Mammary epithelial cell (primary cell): ENCODE measurements at regions of chr17 and their contacts with region 1.

Region 1: GRCh38 chr17:55584050-55584685 is 72.9 kb upstream of the SMIM36 start:
- DNase-seq: peak; percentile 53
- H3K4me3 ChIP-seq: no peak overlapping the region
- H3K27ac ChIP-seq: no peak overlapping the region
- H3K4me1 ChIP-seq: peaks cover 11% of the 10 kb centered on the region
- H3K27me3 ChIP-seq: no peaks in the 10 kb centered on the region
- CTCF ChIP-seq: no peak

Region 2: DNA sequence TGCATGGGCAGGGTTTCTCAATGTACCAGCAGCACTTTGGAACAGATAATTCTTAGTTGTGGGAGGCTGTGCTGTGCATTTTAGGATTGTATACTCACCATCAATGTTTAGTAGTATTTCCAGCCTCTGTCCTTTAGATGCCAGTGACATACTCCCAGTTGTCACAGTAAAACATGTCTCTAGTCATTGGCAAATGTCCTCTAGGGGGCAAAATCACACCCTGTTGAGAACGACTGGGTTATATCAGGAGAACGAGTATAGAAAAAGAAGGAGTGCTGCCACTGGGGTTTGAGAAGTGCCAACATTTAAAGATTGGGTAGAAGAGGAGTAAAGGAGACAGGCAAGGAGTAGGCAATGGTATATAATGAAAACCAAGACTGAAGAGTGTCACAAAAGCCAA is 35.0 kb before region 1 on chr17:
- CTCF ChIA-PET with region 1: no interaction called
- dilution Hi-C with region 1: no loop called
- in situ Hi-C with region 1: no loop called
- intact Hi-C with region 1: loop called (anchors 5 kb)
- DNase-seq: no peak
- H3K4me3 ChIP-seq: no peak overlapping the region
- H3K27ac ChIP-seq: no peak overlapping the region
- H3K4me1 ChIP-seq: no peaks in the 10 kb centered on the region
- H3K27me3 ChIP-seq: peaks cover 4% of the 10 kb centered on the region
- CTCF ChIP-seq: peak; percentile 12 to 26